ENCODE measurements at regions of chr1 and their contacts with region 1.

Region 1: GRCh38 chr1:180213401-180214170 is 16.5 kb upstream of the LHX4 start:
- DNase-seq: peak; percentile 80
- H3K4me3 Mint-ChIP-seq: peak overlapping the region; percentile 56
- H3K27ac Mint-ChIP-seq: no peak overlapping the region
- H3K4me1 Mint-ChIP-seq: peaks cover 20% of the 10 kb centered on the region
- H3K27me3 Mint-ChIP-seq: peaks cover 4% of the 10 kb centered on the region

Region 2: GRCh38 chr1:180229152-180229973 is 15.8 kb after region 1 on chr1:
- CTCF ChIA-PET with region 1: interaction called, 3 read pairs
- intact Hi-C with region 1: loop called (anchors 1 kb)
- DNase-seq: peak; percentile 14
- H3K4me3 Mint-ChIP-seq: peak overlapping the region; percentile 66
- H3K27ac Mint-ChIP-seq: no peak overlapping the region
- H3K4me1 Mint-ChIP-seq: peaks cover 26% of the 10 kb centered on the region
- H3K27me3 Mint-ChIP-seq: peaks cover 66% of the 10 kb centered on the region

Region 3: DNA sequence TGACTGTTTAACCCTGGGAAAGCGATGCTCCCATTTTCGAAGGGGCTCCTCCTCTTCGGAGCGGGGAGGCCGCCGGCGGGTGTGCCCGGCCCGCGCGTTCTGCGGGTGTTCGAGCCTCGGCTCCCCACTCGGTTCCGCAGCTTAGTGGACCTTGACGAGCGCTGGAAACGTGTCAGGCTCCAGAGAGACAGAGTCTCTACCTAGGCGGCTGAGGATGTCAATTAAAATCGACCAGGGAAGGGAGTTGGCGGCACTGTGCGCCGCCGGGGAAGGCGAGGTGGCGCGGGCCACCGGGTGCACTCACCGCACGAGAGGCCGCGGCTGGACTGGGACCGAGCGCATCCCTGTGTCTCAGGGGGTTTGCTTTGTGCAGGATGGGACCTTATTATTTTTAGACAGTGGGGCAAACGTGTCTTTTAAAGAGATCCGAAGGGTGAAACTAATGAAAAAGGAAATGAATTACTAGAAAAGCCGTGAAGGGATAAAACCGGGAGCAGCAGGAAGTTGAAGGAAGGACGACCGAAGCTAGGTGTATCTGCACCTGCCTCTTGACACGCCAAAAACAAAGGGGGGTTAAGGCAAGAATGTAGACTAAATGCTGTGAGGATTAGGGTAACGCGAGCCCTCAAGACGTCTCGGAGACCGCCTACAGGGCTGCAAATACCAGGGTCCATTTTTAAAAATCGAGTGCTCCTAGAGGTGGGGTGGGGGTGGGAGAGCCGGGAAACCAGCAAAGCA is 22.1 kb after region 1 on chr1:
- CTCF ChIA-PET with region 1: no interaction called
- intact Hi-C with region 1: loop called (anchors 1 kb)
- DNase-seq: no peak
- H3K4me3 Mint-ChIP-seq: no peak overlapping the region
- H3K27ac Mint-ChIP-seq: no peak overlapping the region
- H3K4me1 Mint-ChIP-seq: peaks cover 48% of the 10 kb centered on the region
- H3K27me3 Mint-ChIP-seq: peaks cover 81% of the 10 kb centered on the region

Region 4: GRCh38 chr1:180309338-180309737 is 95.8 kb after region 1 on chr1:
- CTCF ChIA-PET with region 1: no interaction called
- intact Hi-C with region 1: no loop called
- DNase-seq: no peak
- H3K4me3 Mint-ChIP-seq: no peak overlapping the region
- H3K27ac Mint-ChIP-seq: no peak overlapping the region
- H3K4me1 Mint-ChIP-seq: no peaks in the 10 kb centered on the region
- H3K27me3 Mint-ChIP-seq: no peaks in the 10 kb centered on the region

Region 5: GRCh38 chr1:180542838-180543145 is 329.2 kb after region 1 on chr1:
- CTCF ChIA-PET with region 1: no interaction called
- intact Hi-C with region 1: no loop called
- DNase-seq: no peak
- H3K4me3 Mint-ChIP-seq: no peak overlapping the region
- H3K27ac Mint-ChIP-seq: no peak overlapping the region
- H3K4me1 Mint-ChIP-seq: no peaks in the 10 kb centered on the region
- H3K27me3 Mint-ChIP-seq: no peaks in the 10 kb centered on the region

Measured in activated naive CD4-positive, alpha-beta T cell treated with anti-CD3 and anti-CD28 coated beads for 36 hours (primary cell).